ENCODE measurements at regions of chr4 and their contacts with region 1.

Region 1: DNA sequence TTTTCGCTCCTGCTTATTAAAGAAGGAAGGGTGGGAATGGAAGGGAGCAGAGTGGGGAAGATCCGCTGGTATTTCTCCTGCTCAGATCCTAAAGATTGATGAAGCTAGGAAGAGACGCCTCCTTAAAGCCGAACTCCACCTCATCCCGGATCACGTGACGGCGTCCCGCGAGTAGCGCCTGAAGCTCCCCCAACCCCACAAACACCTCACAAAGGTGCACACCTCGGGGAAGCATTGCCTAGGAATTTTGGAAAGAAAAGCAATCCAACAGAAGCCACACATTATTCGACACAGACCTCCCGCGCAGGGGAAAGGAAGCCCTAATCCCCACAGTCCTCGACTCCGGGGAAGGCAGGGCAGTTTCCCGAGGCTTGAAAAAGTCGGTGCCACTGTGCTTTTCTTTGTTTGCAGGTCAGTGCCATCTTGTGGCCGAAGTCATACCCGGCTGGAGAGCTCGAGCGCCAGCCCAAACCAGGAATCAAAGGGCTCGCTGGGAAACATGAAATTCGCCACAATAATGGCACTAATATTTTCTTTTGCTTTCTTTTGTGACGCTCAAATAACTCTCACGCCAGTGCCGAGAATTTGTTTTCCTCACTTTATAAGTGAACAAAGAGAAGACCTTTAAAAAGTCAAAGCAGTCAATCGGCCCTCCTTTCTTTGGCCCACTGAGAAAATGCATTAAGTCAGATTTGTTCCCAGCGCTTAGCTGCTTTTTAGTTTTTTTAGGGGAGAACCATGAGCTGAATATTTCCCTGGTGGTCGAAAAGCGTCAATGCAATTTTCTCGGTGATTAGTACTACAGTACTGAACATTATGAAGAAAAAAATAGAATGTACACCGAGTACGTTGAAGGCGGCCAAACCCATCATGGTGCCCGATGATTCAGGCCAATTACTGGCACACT is at the start of gene NPY1R:
- DNase-seq: peak; percentile 70
- ATAC-seq: peak; percentile 80
- H3K4me3 ChIP-seq: peak within 1 kb of the TSS; percentile 76
- H3K27ac ChIP-seq: no peak within 1 kb of the TSS
- H3K4me1 ChIP-seq: no peaks in the 10 kb centered on the region
- H3K27me3 ChIP-seq: peaks cover 21% of the 10 kb centered on the region
- CTCF ChIP-seq: peak; percentile 76
- total RNA-seq, gene NPY1R: 1.3 and 1.7 TPM in 2 replicates

Region 2: DNA sequence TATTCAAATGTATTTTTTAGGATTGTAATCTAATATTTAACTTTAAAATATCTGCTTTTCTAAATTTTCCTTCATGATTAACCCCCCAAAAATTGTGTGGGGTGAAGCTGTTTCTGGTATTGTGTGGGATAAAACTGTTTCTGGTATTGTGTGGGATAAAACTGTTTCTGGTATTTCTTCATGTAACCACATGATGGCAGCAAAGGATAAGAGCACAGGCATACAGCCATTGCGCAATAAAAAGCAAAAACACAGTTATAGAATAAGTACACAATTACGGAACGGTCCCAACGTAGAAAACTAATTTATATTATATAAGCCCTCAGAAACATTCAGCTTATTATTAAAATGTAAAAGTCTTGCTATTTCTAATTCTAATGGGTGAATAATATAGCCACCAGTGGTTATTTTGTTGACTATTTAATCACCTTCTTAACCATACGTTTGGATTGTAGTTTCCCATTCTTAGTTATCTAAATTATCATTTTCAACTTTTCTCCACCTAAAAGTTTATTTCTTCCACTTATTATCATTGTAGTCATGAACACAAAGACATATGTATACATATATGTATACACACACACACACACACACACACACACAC is 835.1 kb before region 1 on chr4:
- CTCF ChIA-PET with region 1: no interaction called
- POLR2A ChIA-PET with region 1: no interaction called
- intact Hi-C with region 1: loop called (anchors 1 kb)
- DNase-seq: peak; percentile 42
- ATAC-seq: peak; percentile 38
- H3K4me3 ChIP-seq: no peak overlapping the region
- H3K27ac ChIP-seq: no peak overlapping the region
- H3K4me1 ChIP-seq: no peaks in the 10 kb centered on the region
- H3K27me3 ChIP-seq: no peaks in the 10 kb centered on the region
- CTCF ChIP-seq: peak; percentile 72

Region 3: GRCh38 chr4:163048447-163048846 is 284.3 kb before region 1 on chr4:
- CTCF ChIA-PET with region 1: interaction called, 7 read pairs
- POLR2A ChIA-PET with region 1: no interaction called
- intact Hi-C with region 1: loop called (anchors 1 kb)
- DNase-seq: peak; percentile 51
- ATAC-seq: peak; percentile 73
- H3K4me3 ChIP-seq: no peak overlapping the region
- H3K27ac ChIP-seq: no peak overlapping the region
- H3K4me1 ChIP-seq: no peaks in the 10 kb centered on the region
- H3K27me3 ChIP-seq: no peaks in the 10 kb centered on the region
- CTCF ChIP-seq: peak; percentile 64

Region 4: GRCh38 chr4:163107754-163108153 is 225.0 kb before region 1 on chr4:
- CTCF ChIA-PET with region 1: interaction called, 3 read pairs
- POLR2A ChIA-PET with region 1: no interaction called
- intact Hi-C with region 1: loop called (anchors 1 kb)
- DNase-seq: peak; percentile 30
- ATAC-seq: no peak
- H3K4me3 ChIP-seq: no peak overlapping the region
- H3K27ac ChIP-seq: no peak overlapping the region
- H3K4me1 ChIP-seq: no peaks in the 10 kb centered on the region
- H3K27me3 ChIP-seq: no peaks in the 10 kb centered on the region
- CTCF ChIP-seq: peak; percentile 48

Region 5: DNA sequence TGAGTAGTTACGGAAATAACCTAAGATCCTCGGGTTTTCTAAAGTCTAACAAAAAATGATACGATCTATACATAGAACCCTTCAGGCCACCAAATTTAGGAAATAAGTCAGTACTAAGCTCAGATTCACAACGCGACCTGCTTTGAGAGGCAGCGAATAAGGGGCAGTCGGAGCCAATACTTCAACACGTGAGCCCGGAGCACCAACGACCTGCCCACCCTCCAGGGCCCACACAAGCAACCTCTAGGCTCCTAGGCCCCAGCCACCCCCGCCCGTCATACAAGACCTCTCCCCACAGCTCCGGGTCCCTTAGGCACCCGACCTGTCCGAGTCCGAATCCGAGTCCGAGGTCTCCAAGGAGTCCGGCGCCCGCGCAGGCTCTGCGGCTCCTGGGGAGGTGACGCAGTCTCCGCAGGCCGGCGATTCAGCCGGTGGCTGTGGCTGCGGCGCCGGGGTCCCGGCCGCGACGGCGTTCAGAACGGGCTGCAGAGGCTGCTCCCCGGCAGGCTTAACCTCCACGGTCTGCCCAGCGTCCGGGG is 166.6 kb before region 1 on chr4:
- CTCF ChIA-PET with region 1: no interaction called
- POLR2A ChIA-PET with region 1: no interaction called
- intact Hi-C with region 1: loop called (anchors 1 kb)
- DNase-seq: peak; percentile 28
- ATAC-seq: peak; percentile 73
- H3K4me3 ChIP-seq: peak overlapping the region; percentile 91
- H3K27ac ChIP-seq: peak overlapping the region; percentile 25
- H3K4me1 ChIP-seq: peaks cover 25% of the 10 kb centered on the region
- H3K27me3 ChIP-seq: no peaks in the 10 kb centered on the region
- CTCF ChIP-seq: no peak

Region 6: GRCh38 chr4:163372029-163372428 is 39.3 kb after region 1 on chr4:
- CTCF ChIA-PET with region 1: no interaction called
- POLR2A ChIA-PET with region 1: no interaction called
- intact Hi-C with region 1: no loop called
- DNase-seq: no peak
- ATAC-seq: no peak
- H3K4me3 ChIP-seq: no peak overlapping the region
- H3K27ac ChIP-seq: no peak overlapping the region
- H3K4me1 ChIP-seq: peaks cover 8% of the 10 kb centered on the region
- H3K27me3 ChIP-seq: no peaks in the 10 kb centered on the region
- CTCF ChIP-seq: no peak

Region 7: GRCh38 chr4:163440040-163440439 is 107.3 kb after region 1 on chr4:
- CTCF ChIA-PET with region 1: no interaction called
- POLR2A ChIA-PET with region 1: no interaction called
- intact Hi-C with region 1: loop called (anchors 5 kb)
- DNase-seq: no peak
- ATAC-seq: no peak
- H3K4me3 ChIP-seq: no peak overlapping the region
- H3K27ac ChIP-seq: no peak overlapping the region
- H3K4me1 ChIP-seq: no peaks in the 10 kb centered on the region
- H3K27me3 ChIP-seq: no peaks in the 10 kb centered on the region
- CTCF ChIP-seq: no peak

Region 8: GRCh38 chr4:163744861-163745260 is 412.1 kb after region 1 on chr4:
- CTCF ChIA-PET with region 1: no interaction called
- POLR2A ChIA-PET with region 1: no interaction called
- intact Hi-C with region 1: no loop called
- DNase-seq: no peak
- ATAC-seq: no peak
- H3K4me3 ChIP-seq: no peak overlapping the region
- H3K27ac ChIP-seq: no peak overlapping the region
- H3K4me1 ChIP-seq: no peaks in the 10 kb centered on the region
- H3K27me3 ChIP-seq: no peaks in the 10 kb centered on the region
- CTCF ChIP-seq: no peak